HEK293T (cell line): ENCODE measurements at regions of chr13 and their contacts with region 1.

Region 1: GRCh38 chr13:99969919-99970621 is 1.5 kb downstream of the ZIC5 start:
- DNase-seq: peak; percentile 62

Region 2: GRCh38 chr13:99980201-99980823 is 10.2 kb after region 1 on chr13:
- CTCF ChIA-PET with region 1: interaction called, 3 read pairs
- POLR2A ChIA-PET with region 1: interaction called, 66 read pairs
- DNase-seq: peak; percentile 62

Region 3: GRCh38 chr13:99990126-99990977 is 20.3 kb after region 1 on chr13:
- CTCF ChIA-PET with region 1: interaction called, 3 read pairs
- POLR2A ChIA-PET with region 1: interaction called, 37 read pairs
- DNase-seq: no peak